ENCODE measurements at regions of chr12 and their contacts with region 1.

Region 1: DNA sequence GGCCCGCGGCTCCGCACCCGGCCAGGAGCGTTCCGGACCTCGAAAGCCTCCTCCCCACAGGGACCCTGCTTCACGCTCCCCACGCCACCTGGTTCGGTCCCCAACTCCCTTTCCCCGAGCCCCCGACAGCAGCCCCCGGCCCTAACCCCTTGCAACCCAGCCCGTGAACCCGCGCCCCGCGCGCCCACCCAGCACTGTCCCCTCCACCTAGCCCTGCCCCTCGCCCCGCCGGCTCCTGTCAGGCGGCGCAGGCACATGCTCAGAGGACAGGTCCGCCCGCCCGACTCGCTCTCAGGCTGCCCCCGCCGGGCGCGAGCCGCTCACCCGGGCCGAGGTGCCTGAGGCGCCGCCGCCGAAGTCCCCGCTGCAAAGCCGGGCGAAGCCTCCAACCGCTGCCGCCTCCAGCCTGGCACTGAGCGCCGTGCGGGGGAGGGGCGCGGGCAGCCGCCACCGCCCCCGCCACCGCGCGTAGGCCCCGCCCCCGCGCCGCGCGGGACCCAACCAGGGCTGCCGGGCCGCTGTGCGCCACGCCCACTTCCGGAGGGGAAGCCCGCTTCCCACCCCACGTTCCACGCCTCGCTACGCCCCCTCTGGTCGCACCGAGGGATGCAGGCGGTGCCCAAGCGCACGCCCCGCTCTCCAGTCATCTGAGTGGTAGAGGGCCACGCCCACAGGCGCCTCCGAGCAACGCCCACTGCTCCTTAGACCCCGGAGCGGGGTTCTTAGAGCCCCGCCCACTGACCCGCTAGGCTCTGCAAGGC is at the start of gene CORO1C:
- DNase-seq: peak; percentile 96 to 99
- ATAC-seq: peak; percentile 81 to 92 (median 88)
- H3K4me3 ChIP-seq: peak within 1 kb of the TSS; percentile 76 to 98 (median 91)
- H3K27ac ChIP-seq: peak within 1 kb of the TSS; percentile 95 to 99 (median 98)
- H3K4me1 ChIP-seq: peaks cover 0 to 58% (median 27%) of the 10 kb centered on the region in 9 donors
- H3K27me3 ChIP-seq: no peaks in the 10 kb centered on the region
- CTCF ChIP-seq: peak; percentile 76 to 96 (median 93)
- total RNA-seq, gene CORO1C: 50.2 to 88.6 (median 59.1) TPM

Region 2: GRCh38 chr12:108664338-108665258 is 66.7 kb before region 1 on chr12:
- intact Hi-C with region 1: loop called in 4 of 10 experiments (anchors 1 to 5 kb)
- DNase-seq: peak; percentile 53 to 89
- ATAC-seq: peak; percentile 88 to 96 (median 92)
- H3K4me3 ChIP-seq: peak overlapping the region in 1 of 10 donors; percentile 14
- H3K27ac ChIP-seq: peak overlapping the region; percentile 36 to 86 (median 78)
- H3K4me1 ChIP-seq: peaks cover 7 to 71% (median 56%) of the 10 kb centered on the region in 9 donors
- H3K27me3 ChIP-seq: no peaks in the 10 kb centered on the region
- CTCF ChIP-seq: peak; percentile 79 to 99 (median 95)

Region 3: DNA sequence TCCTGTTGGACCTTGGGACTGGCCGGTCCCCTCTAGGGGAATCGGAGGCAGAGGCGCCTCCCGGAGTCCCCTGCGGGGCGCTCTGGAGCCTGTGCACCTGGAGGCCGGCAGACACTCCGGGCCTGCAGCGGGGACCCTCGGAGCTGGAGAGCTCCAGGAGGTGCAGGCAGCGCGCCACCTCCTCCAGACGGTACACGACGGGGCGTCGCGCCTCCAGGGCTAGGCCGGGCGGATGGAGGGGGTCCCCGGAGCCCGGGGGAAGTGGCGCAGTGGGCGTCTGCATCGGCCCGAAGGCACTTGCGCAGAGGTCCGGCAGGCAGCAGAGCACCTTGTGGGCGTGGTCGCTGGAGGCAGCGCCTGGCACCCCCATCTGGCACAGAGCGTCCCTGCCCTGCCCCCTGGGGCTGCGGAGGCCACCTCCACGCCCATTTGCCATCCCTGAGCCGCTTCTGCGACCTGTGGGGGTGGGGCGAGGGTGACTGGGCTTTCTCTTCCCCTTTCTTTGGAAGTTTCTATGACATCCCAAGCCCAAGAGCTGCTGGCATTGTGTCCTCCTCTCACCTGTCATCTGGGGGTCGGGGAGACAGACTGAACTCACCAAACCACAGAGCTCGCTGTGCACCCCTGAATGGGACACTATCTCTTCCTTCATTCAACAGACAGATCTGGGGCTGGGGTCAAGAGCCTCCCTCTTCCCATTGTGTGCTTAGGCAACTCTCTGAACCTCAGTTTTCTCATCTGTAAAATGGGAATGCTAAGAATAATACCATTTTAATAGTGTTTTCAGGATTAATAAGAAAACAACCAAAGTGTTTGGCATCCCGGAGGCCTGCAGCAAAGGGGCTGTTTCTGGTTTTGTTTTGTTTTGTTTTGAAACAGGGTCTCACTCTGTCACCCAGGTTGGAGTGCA is 37.6 kb after region 1 on chr12:
- intact Hi-C with region 1: loop called in 5 of 10 experiments (anchors 1 to 5 kb)
- DNase-seq: peak in 1 of 2 donors; percentile 64
- ATAC-seq: peak in 6 of 8 donors; percentile 9 to 53 (median 32)
- H3K4me3 ChIP-seq: peak overlapping the region in 9 of 10 donors; percentile 24 to 48 (median 42)
- H3K27ac ChIP-seq: peak overlapping the region in 1 of 10 donors; percentile 29
- H3K4me1 ChIP-seq: peaks cover 10 to 43% (median 27%) of the 10 kb centered on the region in 9 donors
- H3K27me3 ChIP-seq: peaks cover 0 to 6% (median 0%) of the 10 kb centered on the region in 7 donors
- CTCF ChIP-seq: peak in 1 of 9 donors; percentile 9

Region 4: DNA sequence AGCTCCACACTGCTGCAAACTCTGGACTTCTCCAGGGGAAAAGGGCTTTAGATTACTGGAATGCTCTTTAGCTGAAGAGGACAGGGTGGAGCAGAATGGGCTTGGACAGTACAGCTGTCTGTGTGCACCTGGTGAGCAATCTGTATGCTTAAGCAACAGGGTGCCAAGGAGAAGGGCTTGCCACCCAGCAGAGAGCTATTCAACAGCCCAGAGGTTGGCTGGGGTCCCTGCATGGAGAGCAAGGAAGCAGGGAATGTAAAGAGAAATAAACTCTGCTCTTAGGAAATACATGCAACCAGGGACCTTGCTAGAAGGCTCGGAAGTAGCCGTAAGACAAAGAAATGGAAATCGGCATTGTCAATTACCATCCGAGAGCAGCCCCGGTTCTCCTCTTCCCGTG is 53.0 kb after region 1 on chr12:
- intact Hi-C with region 1: loop called in 4 of 10 experiments (anchors 5 to 10 kb)
- DNase-seq: no peak
- ATAC-seq: peak in 1 of 8 donors; percentile 13
- H3K4me3 ChIP-seq: no peak overlapping the region
- H3K27ac ChIP-seq: peak overlapping the region in 6 of 10 donors; percentile 0 to 73 (median 52)
- H3K4me1 ChIP-seq: peaks cover 25 to 93% (median 70%) of the 10 kb centered on the region in 9 donors
- H3K27me3 ChIP-seq: no peaks in the 10 kb centered on the region
- CTCF ChIP-seq: no peak

Region 5: DNA sequence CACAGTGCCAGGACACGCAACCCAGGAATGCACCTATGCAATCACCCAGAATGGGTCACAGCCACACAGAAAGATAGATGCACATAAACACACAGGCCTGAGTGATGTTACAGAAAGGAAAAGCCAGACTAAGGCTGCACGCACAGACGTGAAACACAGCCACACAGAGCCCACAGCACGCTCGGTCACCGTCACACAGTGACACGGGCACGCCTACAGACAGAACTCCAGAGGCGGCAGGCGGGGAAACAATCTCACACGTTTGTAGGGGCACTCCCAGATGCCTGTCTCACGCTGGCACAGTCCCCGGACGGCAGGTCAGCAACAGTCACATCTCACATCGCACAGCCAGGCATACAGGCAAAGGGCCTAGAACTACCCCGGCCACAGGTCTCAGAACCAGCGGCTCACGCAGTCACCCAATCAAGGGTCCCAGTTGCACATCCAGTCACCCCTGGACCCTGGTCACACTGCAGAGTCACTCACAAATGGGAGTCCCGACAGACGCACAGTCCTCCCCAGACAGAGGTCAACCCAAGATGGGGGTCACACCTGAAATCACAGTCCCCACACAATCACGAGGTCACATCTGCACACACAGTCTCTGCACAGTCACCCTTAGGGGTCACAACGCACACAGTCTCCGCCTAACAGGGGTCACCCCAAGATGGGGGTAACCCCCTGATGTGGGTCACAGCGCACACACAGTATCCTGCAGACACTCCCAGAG is 125.3 kb after region 1 on chr12:
- intact Hi-C with region 1: loop called in 5 of 10 experiments (anchors 5 kb)
- DNase-seq: peak; percentile 79 to 84
- ATAC-seq: peak; percentile 8 to 70 (median 52)
- H3K4me3 ChIP-seq: peak overlapping the region; percentile 51 to 92 (median 83)
- H3K27ac ChIP-seq: peak overlapping the region; percentile 76 to 98 (median 97)
- H3K4me1 ChIP-seq: peaks cover 38 to 81% (median 66%) of the 10 kb centered on the region in 9 donors
- H3K27me3 ChIP-seq: no peaks in the 10 kb centered on the region
- CTCF ChIP-seq: no peak